Natural killer cell (primary cell): ENCODE measurements at regions of chr9 and their contacts with region 1.

Region 1: GRCh38 chr9:2727966-2728613 is 10.8 kb downstream of the KCNV2 start:
- DNase-seq: peak; percentile 10 to 17
- ATAC-seq: peak; percentile 64 to 93 (median 84)
- H3K4me3 ChIP-seq: no peak overlapping the region
- H3K4me3 Mint-ChIP-seq: peak overlapping the region; percentile 40
- H3K27ac ChIP-seq: no peak overlapping the region
- H3K27ac Mint-ChIP-seq: peak overlapping the region in 1 of 2 donors; percentile 69
- H3K4me1 ChIP-seq: peaks cover 3% of the 10 kb centered on the region
- H3K4me1 Mint-ChIP-seq: peaks cover 6% of the 10 kb centered on the region in 2 donors
- H3K27me3 ChIP-seq: no peaks in the 10 kb centered on the region
- H3K27me3 Mint-ChIP-seq: no peaks in the 10 kb centered on the region
- CTCF ChIP-seq: peak; percentile 58

Region 2: GRCh38 chr9:2132484-2133082 is 595.5 kb before region 1 on chr9:
- intact Hi-C with region 1: loop called (anchors 1 kb)
- DNase-seq: peak in 1 of 2 donors; percentile 28
- ATAC-seq: peak in 1 of 3 donors; percentile 44
- H3K4me3 ChIP-seq: no peak overlapping the region
- H3K4me3 Mint-ChIP-seq: no peak overlapping the region
- H3K27ac ChIP-seq: no peak overlapping the region
- H3K27ac Mint-ChIP-seq: peak overlapping the region; percentile 19 to 41
- H3K4me1 ChIP-seq: no peaks in the 10 kb centered on the region
- H3K4me1 Mint-ChIP-seq: peaks cover 43 to 60% of the 10 kb centered on the region in 2 donors
- H3K27me3 ChIP-seq: no peaks in the 10 kb centered on the region
- H3K27me3 Mint-ChIP-seq: no peaks in the 10 kb centered on the region
- CTCF ChIP-seq: peak; percentile 72

Region 3: GRCh38 chr9:2228132-2228531 is 500.0 kb before region 1 on chr9:
- intact Hi-C with region 1: loop called (anchors 5 kb)
- DNase-seq: no peak
- ATAC-seq: no peak
- H3K4me3 ChIP-seq: no peak overlapping the region
- H3K4me3 Mint-ChIP-seq: no peak overlapping the region
- H3K27ac ChIP-seq: no peak overlapping the region
- H3K27ac Mint-ChIP-seq: no peak overlapping the region
- H3K4me1 ChIP-seq: peaks cover 5% of the 10 kb centered on the region
- H3K4me1 Mint-ChIP-seq: peaks cover 5 to 15% of the 10 kb centered on the region in 2 donors
- H3K27me3 ChIP-seq: no peaks in the 10 kb centered on the region
- H3K27me3 Mint-ChIP-seq: no peaks in the 10 kb centered on the region
- CTCF ChIP-seq: peak; percentile 18

Region 4: GRCh38 chr9:2336055-2336454 is 392.0 kb before region 1 on chr9:
- intact Hi-C with region 1: loop called (anchors 5 kb)
- DNase-seq: no peak
- ATAC-seq: no peak
- H3K4me3 ChIP-seq: no peak overlapping the region
- H3K4me3 Mint-ChIP-seq: no peak overlapping the region
- H3K27ac ChIP-seq: no peak overlapping the region
- H3K27ac Mint-ChIP-seq: no peak overlapping the region
- H3K4me1 ChIP-seq: no peaks in the 10 kb centered on the region
- H3K4me1 Mint-ChIP-seq: no peaks in the 10 kb centered on the region
- H3K27me3 ChIP-seq: no peaks in the 10 kb centered on the region
- H3K27me3 Mint-ChIP-seq: peaks cover 5 to 7% of the 10 kb centered on the region in 2 donors
- CTCF ChIP-seq: no peak

Region 5: DNA sequence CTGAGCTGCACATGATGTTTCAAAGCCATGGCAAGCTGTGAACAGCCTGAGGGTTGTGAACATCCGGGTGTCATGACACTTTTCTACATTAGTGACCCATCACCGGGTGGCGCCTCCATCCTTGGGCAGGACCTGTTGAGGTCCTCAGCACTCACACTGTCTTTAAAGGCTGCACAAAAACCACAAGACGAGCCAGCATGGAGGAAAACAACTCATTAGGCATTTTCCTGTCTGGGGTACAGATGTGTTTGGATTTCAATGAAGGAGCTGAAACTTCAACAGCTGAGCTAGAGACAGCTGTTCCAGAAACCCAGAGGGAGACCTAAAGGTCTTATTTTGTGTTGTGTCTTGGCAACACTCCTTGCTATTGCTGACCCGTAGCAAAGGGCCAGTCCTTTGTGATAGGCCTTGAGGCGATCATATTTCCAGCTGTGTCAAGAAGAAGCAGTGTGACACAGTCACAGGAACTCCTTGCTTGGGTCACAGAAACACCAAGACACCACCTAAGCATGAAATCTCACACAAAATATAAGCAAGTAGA is 258.3 kb before region 1 on chr9:
- intact Hi-C with region 1: loop called (anchors 10 kb)
- DNase-seq: no peak
- ATAC-seq: peak in 1 of 3 donors; percentile 38
- H3K4me3 ChIP-seq: no peak overlapping the region
- H3K4me3 Mint-ChIP-seq: no peak overlapping the region
- H3K27ac ChIP-seq: no peak overlapping the region
- H3K27ac Mint-ChIP-seq: no peak overlapping the region
- H3K4me1 ChIP-seq: no peaks in the 10 kb centered on the region
- H3K4me1 Mint-ChIP-seq: no peaks in the 10 kb centered on the region
- H3K27me3 ChIP-seq: no peaks in the 10 kb centered on the region
- H3K27me3 Mint-ChIP-seq: peaks cover 3 to 7% of the 10 kb centered on the region in 2 donors
- CTCF ChIP-seq: no peak

Region 6: DNA sequence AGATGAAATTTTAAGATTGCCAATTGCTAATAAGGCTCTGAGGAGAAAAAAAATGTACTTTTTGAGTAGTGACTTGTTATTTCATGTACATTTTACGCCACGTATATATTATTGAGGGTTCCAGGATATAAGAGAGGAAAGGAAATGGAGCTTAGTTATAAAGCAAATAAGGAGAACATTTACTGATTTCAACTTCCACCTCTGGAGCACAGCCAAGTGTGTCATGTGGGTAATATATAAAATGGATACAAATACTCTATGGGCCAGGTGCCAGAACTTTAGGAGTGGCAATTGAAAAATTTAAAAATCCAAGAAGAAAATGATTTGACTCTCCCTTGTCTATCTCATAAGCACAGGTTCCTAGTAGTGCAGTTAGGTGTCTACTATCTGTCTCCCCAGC is 151.5 kb before region 1 on chr9:
- intact Hi-C with region 1: loop called (anchors 5 kb)
- DNase-seq: no peak
- ATAC-seq: no peak
- H3K4me3 ChIP-seq: no peak overlapping the region
- H3K4me3 Mint-ChIP-seq: no peak overlapping the region
- H3K27ac ChIP-seq: no peak overlapping the region
- H3K27ac Mint-ChIP-seq: no peak overlapping the region
- H3K4me1 ChIP-seq: no peaks in the 10 kb centered on the region
- H3K4me1 Mint-ChIP-seq: peaks cover 0 to 1% of the 10 kb centered on the region in 2 donors
- H3K27me3 ChIP-seq: no peaks in the 10 kb centered on the region
- H3K27me3 Mint-ChIP-seq: peaks cover 14 to 21% of the 10 kb centered on the region in 2 donors
- CTCF ChIP-seq: no peak

Region 7: GRCh38 chr9:3419893-3420292 is 691.8 kb after region 1 on chr9:
- intact Hi-C with region 1: no loop called
- DNase-seq: no peak
- ATAC-seq: no peak
- H3K4me3 ChIP-seq: no peak overlapping the region
- H3K4me3 Mint-ChIP-seq: no peak overlapping the region
- H3K27ac ChIP-seq: no peak overlapping the region
- H3K27ac Mint-ChIP-seq: no peak overlapping the region
- H3K4me1 ChIP-seq: no peaks in the 10 kb centered on the region
- H3K4me1 Mint-ChIP-seq: no peaks in the 10 kb centered on the region
- H3K27me3 ChIP-seq: no peaks in the 10 kb centered on the region
- H3K27me3 Mint-ChIP-seq: no peaks in the 10 kb centered on the region
- CTCF ChIP-seq: no peak